ENCODE measurements at regions of chr4 and their contacts with region 1.

Region 1: DNA sequence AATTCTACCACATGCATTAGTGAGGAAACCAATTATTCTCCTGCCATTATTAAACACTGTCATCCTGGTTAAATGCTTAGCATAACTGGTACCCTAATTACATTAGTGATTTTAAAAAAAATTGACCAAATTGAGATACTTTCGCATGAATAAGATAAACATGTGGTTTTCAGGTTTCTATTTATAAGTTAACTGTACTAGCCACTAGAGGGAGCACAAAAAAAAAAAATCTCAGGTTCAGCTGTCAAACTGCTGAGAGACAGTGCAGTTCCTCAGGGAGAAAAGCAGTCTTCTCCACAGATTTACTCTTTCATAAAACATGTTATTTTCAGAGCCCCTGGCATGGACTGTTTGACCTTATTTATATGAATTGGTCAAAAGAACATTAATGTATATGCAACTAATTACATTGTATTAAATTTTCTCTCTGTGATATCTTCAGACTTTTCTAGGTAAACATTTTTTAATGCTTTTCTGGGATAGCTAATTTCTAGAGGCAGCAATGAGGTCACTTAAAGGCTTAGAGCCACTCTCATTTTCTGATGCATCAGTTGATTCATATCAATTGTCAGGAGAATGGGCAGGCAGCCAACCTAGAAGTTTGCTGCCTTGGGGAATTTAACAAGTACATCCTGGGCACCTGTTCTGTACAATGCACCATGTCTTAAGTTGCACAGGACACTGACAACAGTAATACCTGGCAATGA is 167.5 kb downstream of the CDS1 start:
- DNase-seq: no peak
- ATAC-seq: no peak
- H3K4me3 Mint-ChIP-seq: no peak overlapping the region
- H3K27ac Mint-ChIP-seq: no peak overlapping the region
- H3K4me1 Mint-ChIP-seq: no peaks in the 10 kb centered on the region
- H3K27me3 Mint-ChIP-seq: no peaks in the 10 kb centered on the region

Region 2: GRCh38 chr4:84279678-84280077 is 470.7 kb before region 1 on chr4:
- CTCF ChIA-PET with region 1: no interaction called
- DNase-seq: no peak
- ATAC-seq: no peak
- H3K4me3 Mint-ChIP-seq: no peak overlapping the region
- H3K27ac Mint-ChIP-seq: no peak overlapping the region
- H3K4me1 Mint-ChIP-seq: no peaks in the 10 kb centered on the region
- H3K27me3 Mint-ChIP-seq: no peaks in the 10 kb centered on the region

Region 3: GRCh38 chr4:84737656-84738055 is 12.8 kb before region 1 on chr4:
- CTCF ChIA-PET with region 1: interaction called, 16 read pairs
- DNase-seq: no peak
- ATAC-seq: no peak
- H3K4me3 Mint-ChIP-seq: no peak overlapping the region
- H3K27ac Mint-ChIP-seq: no peak overlapping the region
- H3K4me1 Mint-ChIP-seq: no peaks in the 10 kb centered on the region
- H3K27me3 Mint-ChIP-seq: peaks cover 6% of the 10 kb centered on the region

Region 4: DNA sequence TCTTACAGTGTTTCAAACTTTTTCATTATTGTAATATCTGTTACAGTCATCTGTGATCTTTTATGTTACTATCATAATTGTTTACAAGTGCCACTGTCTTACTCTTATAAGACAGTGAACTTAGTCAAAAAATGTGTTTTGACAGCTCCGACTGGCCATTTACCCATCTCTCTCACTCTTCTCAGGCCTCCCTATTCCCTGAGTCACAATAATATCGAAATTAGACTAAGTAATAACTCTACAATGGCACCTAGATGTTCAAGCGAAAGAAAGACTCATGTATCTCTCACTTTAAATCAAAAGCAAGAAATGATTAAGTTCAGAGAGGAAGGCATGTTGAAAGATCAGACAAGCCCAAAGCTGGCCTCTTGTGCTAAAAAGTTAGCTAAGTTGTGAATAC is 16.8 kb after region 1 on chr4:
- CTCF ChIA-PET with region 1: no interaction called
- DNase-seq: no peak
- ATAC-seq: no peak
- H3K4me3 Mint-ChIP-seq: no peak overlapping the region
- H3K27ac Mint-ChIP-seq: peak overlapping the region; percentile 17
- H3K4me1 Mint-ChIP-seq: peaks cover 7% of the 10 kb centered on the region
- H3K27me3 Mint-ChIP-seq: no peaks in the 10 kb centered on the region

Region 5: GRCh38 chr4:84804136-84804535 is 53.7 kb after region 1 on chr4:
- CTCF ChIA-PET with region 1: no interaction called
- DNase-seq: no peak
- ATAC-seq: no peak
- H3K4me3 Mint-ChIP-seq: no peak overlapping the region
- H3K27ac Mint-ChIP-seq: no peak overlapping the region
- H3K4me1 Mint-ChIP-seq: no peaks in the 10 kb centered on the region
- H3K27me3 Mint-ChIP-seq: no peaks in the 10 kb centered on the region

Region 6: DNA sequence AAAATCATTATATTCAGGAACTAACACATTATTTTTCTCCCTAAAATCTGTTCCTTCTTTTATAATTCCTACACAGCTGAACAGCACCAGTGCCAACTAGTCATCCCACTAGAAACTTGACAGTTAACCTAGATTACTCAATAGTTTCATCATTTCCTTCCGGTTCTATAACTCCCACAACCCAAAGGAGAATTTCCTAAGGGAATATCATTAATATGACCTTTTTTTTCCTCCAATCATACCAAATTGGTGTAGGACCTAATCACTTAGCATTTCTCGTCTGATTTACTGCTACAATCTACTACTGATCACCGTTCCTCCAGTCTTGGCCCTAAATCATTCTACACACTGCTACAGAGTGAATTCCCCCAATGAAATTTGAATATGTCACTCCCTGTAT is 170.2 kb after region 1 on chr4:
- CTCF ChIA-PET with region 1: no interaction called
- DNase-seq: no peak
- ATAC-seq: no peak
- H3K4me3 Mint-ChIP-seq: no peak overlapping the region
- H3K27ac Mint-ChIP-seq: no peak overlapping the region
- H3K4me1 Mint-ChIP-seq: no peaks in the 10 kb centered on the region
- H3K27me3 Mint-ChIP-seq: no peaks in the 10 kb centered on the region

Region 7: DNA sequence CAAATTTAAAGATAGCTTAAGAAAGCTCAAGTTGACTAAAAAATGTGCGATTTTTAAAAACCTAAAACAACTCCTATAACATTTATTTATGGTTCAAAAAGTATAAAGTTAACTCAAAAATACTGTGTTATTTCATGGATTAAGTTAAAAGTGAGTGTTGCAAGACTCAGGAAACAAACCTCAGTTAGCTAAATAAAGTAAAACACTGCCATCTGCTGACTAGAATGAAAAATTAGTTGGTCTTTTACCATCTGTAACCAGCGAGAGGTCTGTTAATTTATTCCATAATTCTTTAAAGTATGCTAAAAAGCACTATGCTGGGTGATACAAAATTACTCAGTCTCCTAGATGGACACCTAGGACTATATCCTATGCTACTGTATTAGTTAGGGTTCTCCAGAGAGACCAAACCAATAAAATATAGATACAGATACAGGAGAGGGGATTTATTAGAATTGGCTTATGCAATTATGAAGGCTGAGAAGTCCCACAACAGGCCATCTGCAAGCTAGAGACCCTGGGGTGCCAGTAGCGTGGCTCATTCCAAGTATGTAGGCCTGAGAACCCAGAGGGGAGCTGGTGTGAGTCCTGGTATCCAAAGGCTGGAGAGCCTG is 221.0 kb after region 1 on chr4:
- CTCF ChIA-PET with region 1: interaction called, 13 read pairs
- DNase-seq: no peak
- ATAC-seq: no peak
- H3K4me3 Mint-ChIP-seq: no peak overlapping the region
- H3K27ac Mint-ChIP-seq: no peak overlapping the region
- H3K4me1 Mint-ChIP-seq: peaks cover 3% of the 10 kb centered on the region
- H3K27me3 Mint-ChIP-seq: peaks cover 25% of the 10 kb centered on the region